ENCODE measurements at regions of chr20 and their contacts with region 1.

Region 1: DNA sequence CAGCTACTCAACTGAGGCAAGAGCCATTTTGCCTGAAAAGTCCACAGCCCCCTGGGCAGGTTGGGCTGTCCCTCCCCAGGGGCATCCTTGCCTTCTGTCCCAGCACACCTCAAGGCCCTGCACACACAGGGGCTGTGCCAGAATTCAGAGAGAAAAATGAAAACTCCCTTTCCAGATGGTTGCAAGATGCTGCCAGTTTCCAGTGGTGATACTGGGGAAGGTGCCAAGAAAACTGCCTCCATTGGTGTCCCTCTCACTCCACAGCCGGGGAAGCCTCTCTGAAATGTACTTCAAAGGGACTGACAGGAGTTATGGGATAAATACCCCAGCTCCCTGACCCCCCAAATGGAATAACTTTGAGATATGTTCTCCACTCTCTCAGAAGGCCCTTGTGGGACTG is 154.2 kb upstream of the MAFB start:
- DNase-seq: no peak
- ATAC-seq: no peak
- H3K4me3 ChIP-seq: no peak overlapping the region
- H3K4me3 Mint-ChIP-seq: no peak overlapping the region
- H3K27ac ChIP-seq: no peak overlapping the region
- H3K27ac Mint-ChIP-seq: no peak overlapping the region
- H3K4me1 ChIP-seq: no peaks in the 10 kb centered on the region
- H3K4me1 Mint-ChIP-seq: no peaks in the 10 kb centered on the region
- H3K27me3 ChIP-seq: peaks cover 0 to 7% of the 10 kb centered on the region in 2 experiments
- H3K27me3 Mint-ChIP-seq: peaks cover 3 to 10% of the 10 kb centered on the region in 2 donors

Region 2: DNA sequence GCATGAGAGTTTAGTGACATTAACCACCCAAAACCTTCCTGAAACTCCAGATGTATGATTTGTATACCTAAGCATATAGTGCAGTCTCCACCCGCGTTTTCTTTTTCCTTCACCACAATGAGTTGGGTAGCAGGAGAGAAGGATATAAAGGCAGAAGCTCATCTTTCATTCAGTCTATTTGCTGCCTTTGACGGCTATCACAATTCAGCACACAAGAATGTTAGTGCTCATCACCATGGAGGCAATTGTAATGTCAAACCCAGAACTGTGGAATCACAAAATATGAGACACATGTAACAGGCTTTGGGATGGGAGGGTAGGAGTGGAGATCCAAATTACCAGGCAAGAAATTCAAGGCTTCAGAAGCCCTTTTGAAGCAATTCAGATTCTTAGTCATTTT is 456.6 kb after region 1 on chr20:
- CTCF ChIA-PET with region 1: interaction called in 1 of 2 experiments, 10 read pairs
- POLR2A ChIA-PET with region 1: no interaction called
- DNase-seq: no peak
- ATAC-seq: no peak
- H3K4me3 ChIP-seq: no peak overlapping the region
- H3K4me3 Mint-ChIP-seq: no peak overlapping the region
- H3K27ac ChIP-seq: no peak overlapping the region
- H3K27ac Mint-ChIP-seq: no peak overlapping the region
- H3K4me1 ChIP-seq: no peaks in the 10 kb centered on the region
- H3K4me1 Mint-ChIP-seq: peaks cover 0 to 5% (median 0%) of the 10 kb centered on the region in 3 donors
- H3K27me3 ChIP-seq: no peaks in the 10 kb centered on the region
- H3K27me3 Mint-ChIP-seq: no peaks in the 10 kb centered on the region

Measured in T-cell (primary cell).